Activated CD4-positive, alpha-beta T cell treated with anti-CD3 and anti-CD28 coated beads for 36 hours (primary cell): ENCODE measurements at regions of chr14 and their contacts with region 1.

Region 1: GRCh38 chr14:66606826-66607225 is 98.9 kb downstream of the GPHN start:
- DNase-seq: no peak
- ATAC-seq: peak; percentile 84
- H3K4me3 Mint-ChIP-seq: no peak overlapping the region
- H3K27ac Mint-ChIP-seq: no peak overlapping the region
- H3K4me1 Mint-ChIP-seq: peaks cover 34% of the 10 kb centered on the region
- H3K27me3 Mint-ChIP-seq: no peaks in the 10 kb centered on the region

Region 2: DNA sequence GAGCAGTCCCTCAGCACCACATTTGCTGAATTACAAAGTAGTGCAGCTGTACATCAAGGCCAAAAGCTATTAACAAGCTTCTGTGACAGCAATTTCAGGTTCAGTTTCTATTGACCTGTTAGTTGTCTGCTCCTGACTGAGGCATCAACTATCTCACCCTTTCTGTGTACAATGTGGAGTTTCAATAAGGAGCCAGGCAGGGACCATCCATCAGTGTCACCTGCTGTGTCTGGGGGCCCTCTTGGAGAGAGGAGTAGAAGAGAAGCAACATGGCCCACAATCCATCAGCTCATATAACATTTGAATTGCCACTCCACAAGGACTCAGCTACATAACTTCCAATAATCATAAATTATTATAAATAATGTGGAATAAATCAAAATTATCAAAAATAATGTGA is 192.9 kb before region 1 on chr14:
- CTCF ChIA-PET with region 1: no interaction called
- POLR2A ChIA-PET with region 1: no interaction called
- intact Hi-C with region 1: no loop called
- DNase-seq: no peak
- ATAC-seq: no peak
- H3K4me3 Mint-ChIP-seq: no peak overlapping the region
- H3K27ac Mint-ChIP-seq: no peak overlapping the region
- H3K4me1 Mint-ChIP-seq: no peaks in the 10 kb centered on the region
- H3K27me3 Mint-ChIP-seq: peaks cover 2% of the 10 kb centered on the region

Region 3: DNA sequence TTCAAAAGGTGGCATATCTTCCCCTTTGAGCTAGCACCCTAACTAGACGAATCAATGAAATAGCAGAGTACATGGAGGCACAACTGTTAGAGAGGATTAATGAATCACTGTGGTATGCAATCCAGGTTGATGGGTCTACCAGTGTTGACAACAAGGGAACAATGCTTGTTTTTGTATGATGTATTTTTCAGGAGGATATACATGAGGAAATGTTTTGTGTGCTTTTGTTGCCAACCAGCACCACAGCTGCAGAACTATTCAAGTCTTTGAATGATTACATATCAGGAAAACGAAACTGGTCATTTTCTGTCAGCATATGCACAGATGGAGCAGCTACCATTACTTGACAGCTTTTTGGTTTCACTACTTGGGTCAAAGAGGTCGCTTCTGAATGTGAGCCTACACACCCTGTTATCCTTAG is 43.7 kb after region 1 on chr14:
- CTCF ChIA-PET with region 1: no interaction called
- POLR2A ChIA-PET with region 1: no interaction called
- intact Hi-C with region 1: loop called in 1 of 2 experiments (anchors 2 kb)
- DNase-seq: no peak
- ATAC-seq: peak; percentile 51
- H3K4me3 Mint-ChIP-seq: no peak overlapping the region
- H3K27ac Mint-ChIP-seq: no peak overlapping the region
- H3K4me1 Mint-ChIP-seq: peaks cover 23% of the 10 kb centered on the region
- H3K27me3 Mint-ChIP-seq: no peaks in the 10 kb centered on the region